ENCODE measurements at regions of chr22 and their contacts with region 1.

Region 1: DNA sequence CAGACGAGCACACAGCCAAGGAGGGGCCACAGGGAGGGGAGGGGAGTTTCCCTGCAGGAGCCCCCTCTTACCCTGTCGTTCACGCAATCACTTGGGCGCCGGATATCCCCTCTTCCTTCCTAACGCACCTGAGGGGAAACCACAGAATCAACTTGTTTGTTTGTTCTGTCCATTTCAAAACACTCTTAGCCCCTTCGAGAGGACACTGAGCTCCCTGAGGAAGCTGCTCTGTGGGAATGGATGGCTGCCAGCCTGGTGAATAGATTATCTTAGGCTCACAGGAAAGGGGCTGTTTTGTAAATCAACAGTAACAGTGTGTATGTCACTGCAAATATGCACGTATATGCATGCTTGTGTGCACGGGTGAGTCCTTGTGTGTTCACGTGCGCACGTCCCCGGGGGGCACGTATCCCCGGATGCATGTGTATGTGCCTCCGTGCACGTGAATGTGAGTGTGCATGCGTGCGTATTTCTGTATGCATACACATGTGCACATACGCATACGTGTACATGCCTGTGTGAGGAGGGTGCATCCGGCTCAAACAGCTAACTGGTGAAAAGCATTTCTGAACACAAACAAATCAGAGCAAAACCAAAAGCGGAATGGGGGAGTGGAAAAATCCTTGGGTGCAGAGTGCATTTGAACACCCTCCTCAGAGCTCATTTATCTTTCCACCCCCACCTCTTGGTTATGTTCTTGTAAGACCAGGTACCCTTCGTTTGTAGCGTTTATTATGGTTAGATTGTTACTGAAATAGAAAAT is 7.2 kb downstream of the ARSA start:
- DNase-seq: no peak
- H3K4me3 ChIP-seq: no peak overlapping the region
- H3K27me3 ChIP-seq: peaks cover 5% of the 10 kb centered on the region
- CTCF ChIP-seq: no peak; the same call in 1 of the 2 replicates

Region 2: GRCh38 chr22:50481440-50482106 is 139.2 kb before region 1 on chr22 and contains the start of gene ADM2:
- CTCF ChIA-PET with region 1: no interaction called
- POLR2A ChIA-PET with region 1: no interaction called
- DNase-seq: no peak
- H3K4me3 ChIP-seq: peak within 1 kb of the TSS; percentile 77
- H3K27me3 ChIP-seq: peaks cover 8% of the 10 kb centered on the region; the same call in 1 of the 2 replicates
- CTCF ChIP-seq: no peak
- polyA plus RNA-seq, gene ADM2: 8.1 and 16.0 TPM in 2 replicates

Region 3: GRCh38 chr22:50600967-50601668 is 19.7 kb before region 1 on chr22:
- CTCF ChIA-PET with region 1: interaction called, 10 read pairs
- POLR2A ChIA-PET with region 1: no interaction called
- DNase-seq: no peak
- H3K4me3 ChIP-seq: peak overlapping the region; percentile 26
- H3K27me3 ChIP-seq: peaks cover 32% of the 10 kb centered on the region
- CTCF ChIP-seq: no peak